BJ (cell line): ENCODE measurements at regions of chr14 and their contacts with region 1.

Region 1: DNA sequence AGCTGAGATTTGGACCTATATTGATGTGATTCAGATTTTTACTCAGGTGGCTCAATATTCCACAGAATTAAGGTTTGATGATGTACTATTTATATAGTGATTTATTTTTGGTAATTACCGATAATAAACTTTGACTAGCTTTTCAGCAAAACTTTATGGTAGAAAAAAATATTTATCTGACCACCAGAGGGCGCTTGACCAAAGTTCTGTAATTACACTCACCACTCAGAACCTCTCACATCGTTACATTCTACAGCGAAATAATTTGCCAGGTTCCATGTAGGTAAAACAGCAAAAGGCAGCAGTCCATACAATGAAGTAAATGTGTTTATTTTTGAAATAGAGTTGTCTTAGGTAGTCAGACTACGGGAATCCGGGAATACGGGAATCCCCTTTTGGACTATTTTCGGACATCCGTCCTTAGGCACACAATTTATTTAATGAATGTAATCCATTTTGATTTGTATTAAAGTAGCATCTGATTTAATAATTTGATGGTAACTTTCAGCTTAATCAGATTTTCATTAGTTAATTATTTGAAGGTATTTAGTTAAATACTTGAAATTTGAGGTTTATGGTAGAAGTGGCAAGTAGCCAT is 143.0 kb upstream of the DDHD1 start:
- DNase-seq: no peak
- H3K4me3 ChIP-seq: no peak overlapping the region
- H3K27me3 ChIP-seq: no peaks in the 10 kb centered on the region
- CTCF ChIP-seq: peak; percentile 49

Region 2: GRCh38 chr14:53180268-53181221 is 115.5 kb before region 1 on chr14:
- CTCF ChIA-PET with region 1: no interaction called
- POLR2A ChIA-PET with region 1: no interaction called
- DNase-seq: no peak
- H3K4me3 ChIP-seq: no peak overlapping the region
- H3K27me3 ChIP-seq: peaks cover 11% of the 10 kb centered on the region
- CTCF ChIP-seq: 0 out of 2 replicates have a peak, but pooled peaks have one; percentile 22

Region 3: DNA sequence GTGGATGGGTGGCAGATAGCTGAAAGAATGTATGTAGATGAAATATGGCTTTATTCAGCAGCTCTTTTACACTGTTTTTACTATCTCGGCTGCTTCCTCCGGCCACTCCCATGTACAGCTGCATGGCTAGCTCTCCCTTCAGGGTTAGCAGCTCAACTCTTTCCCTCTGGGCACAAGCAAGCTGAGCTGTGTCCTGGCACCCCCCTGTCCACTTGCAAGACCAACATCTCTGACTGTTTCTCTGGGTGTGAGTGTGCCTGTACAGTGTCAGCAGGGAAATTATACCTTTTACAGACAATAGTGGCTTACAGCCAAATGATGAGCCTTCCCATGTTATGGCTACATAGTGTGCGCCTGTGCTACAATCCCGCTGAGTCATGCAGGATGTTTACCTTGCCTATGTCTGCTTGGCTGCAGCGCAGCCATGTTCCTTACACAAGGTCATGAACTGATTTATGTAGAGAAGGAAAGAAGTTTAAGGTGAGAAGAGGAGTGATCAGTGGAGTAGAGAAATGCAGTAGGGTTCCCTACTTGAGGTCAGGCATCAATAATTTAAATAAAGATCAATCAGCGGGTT is 17.1 kb before region 1 on chr14:
- CTCF ChIA-PET with region 1: interaction called, 16 read pairs
- POLR2A ChIA-PET with region 1: no interaction called
- DNase-seq: no peak
- H3K4me3 ChIP-seq: no peak overlapping the region
- H3K27me3 ChIP-seq: no peaks in the 10 kb centered on the region
- CTCF ChIP-seq: no peak

Region 4: GRCh38 chr14:53285805-53286204 is 10.3 kb before region 1 on chr14:
- CTCF ChIA-PET with region 1: interaction called, 16 read pairs
- POLR2A ChIA-PET with region 1: no interaction called
- DNase-seq: no peak
- H3K4me3 ChIP-seq: no peak overlapping the region
- H3K27me3 ChIP-seq: no peaks in the 10 kb centered on the region; the same call in 1 of the 2 replicates
- CTCF ChIP-seq: 0 out of 2 replicates have a peak, but pooled peaks have one; percentile 4

Region 5: GRCh38 chr14:53306267-53306721 is 10.2 kb after region 1 on chr14:
- CTCF ChIA-PET with region 1: interaction called, 38 read pairs
- POLR2A ChIA-PET with region 1: no interaction called
- DNase-seq: no peak
- H3K4me3 ChIP-seq: peak overlapping the region; percentile 38
- H3K27me3 ChIP-seq: peaks cover 3% of the 10 kb centered on the region
- CTCF ChIP-seq: peak; percentile 79

Region 6: DNA sequence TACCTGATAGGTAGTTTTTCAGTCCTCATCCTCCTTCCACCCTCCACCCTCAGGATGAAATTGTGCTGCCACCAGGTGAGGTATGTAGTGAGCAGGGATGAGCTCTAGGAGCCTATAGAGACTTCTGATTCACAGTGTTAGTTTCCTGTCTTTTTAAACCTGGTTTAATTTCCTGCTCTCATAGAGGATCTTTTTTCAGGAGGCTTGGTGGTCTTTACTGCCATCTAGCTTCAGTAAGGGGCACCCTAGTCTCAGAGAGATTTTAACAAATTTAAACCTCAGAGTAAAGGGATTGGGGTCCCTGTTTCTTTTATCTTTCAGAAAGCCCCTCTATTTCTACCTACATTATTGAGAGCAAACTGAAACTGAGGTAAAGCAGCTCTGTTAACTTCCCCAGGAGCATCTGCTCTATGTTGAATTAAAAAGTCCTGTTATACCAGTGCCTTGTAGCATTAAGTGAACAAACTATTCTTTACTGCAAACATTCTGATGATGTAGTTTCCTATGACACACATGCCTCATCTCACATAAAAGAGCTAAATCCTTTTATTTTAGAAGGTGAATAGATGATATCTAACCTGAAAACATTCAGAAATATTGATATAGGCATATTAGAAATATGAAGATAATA is 29.2 kb after region 1 on chr14:
- CTCF ChIA-PET with region 1: interaction called, 10 read pairs
- POLR2A ChIA-PET with region 1: no interaction called
- DNase-seq: no peak
- H3K4me3 ChIP-seq: no peak overlapping the region
- H3K27me3 ChIP-seq: no peaks in the 10 kb centered on the region
- CTCF ChIP-seq: 0 out of 2 replicates have a peak, but pooled peaks have one; percentile 25

Region 7: GRCh38 chr14:53338192-53338591 is 42.1 kb after region 1 on chr14:
- CTCF ChIA-PET with region 1: no interaction called
- POLR2A ChIA-PET with region 1: no interaction called
- DNase-seq: no peak
- H3K4me3 ChIP-seq: no peak overlapping the region
- H3K27me3 ChIP-seq: 0 out of 2 replicates have a peak, but pooled peaks cover 2% of the 10 kb centered on the region
- CTCF ChIP-seq: no peak

Region 8: DNA sequence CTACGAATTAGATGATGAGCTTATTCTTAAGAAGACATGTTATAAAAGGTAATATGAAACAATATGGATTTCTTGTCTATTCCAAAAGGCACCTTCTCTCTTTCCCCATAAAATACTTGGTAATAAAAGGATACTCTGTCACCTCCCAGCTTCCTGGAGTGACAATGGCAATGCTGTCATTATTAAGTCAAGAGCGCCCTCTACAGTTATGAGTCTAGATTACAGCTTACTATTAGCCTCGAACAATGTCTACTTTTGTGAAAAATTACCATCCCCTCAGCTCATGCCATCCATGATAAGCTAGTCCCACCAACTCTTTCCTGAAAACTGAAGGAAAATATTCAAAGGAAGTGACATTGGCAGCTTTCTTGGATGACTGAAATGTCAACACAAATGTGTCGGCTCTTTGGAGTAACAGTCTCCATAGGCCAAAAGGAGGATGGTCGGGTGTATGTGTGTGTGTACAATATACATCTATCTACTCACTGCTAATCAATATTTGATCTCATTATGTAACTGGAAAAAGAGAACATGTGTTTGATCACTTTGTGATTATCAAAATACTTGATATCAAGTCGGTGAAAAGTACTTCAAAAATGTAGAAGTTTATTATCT is 1052.0 kb after region 1 on chr14:
- CTCF ChIA-PET with region 1: interaction called, 40 read pairs
- POLR2A ChIA-PET with region 1: no interaction called
- DNase-seq: no peak
- H3K4me3 ChIP-seq: no peak overlapping the region
- H3K27me3 ChIP-seq: no peaks in the 10 kb centered on the region
- CTCF ChIP-seq: peak; percentile 68